K562 (cell line): ENCODE measurements at regions of chr17 and their contacts with region 1.

Region 1: DNA sequence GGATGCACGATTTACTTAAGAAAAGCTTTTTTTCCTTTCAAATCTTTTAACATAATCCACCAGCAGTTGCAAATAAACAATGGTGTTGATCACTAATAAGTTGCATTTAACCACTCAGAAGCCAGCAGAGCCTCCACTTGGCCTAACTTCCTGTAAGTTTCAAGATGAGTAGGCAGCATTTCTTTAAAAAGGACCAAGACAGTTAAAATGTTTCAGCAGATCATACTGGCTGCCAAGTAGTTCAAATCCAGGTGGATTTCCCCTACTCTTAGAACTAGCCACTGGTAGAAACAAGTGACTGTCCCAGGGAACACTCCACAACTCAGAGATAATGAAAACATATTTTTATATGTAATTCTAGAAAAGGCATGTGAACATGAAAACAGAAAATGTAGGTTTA is 17.0 kb upstream of the RFFL start:
- DNase-seq: no peak
- ATAC-seq: no peak; the same call in 1 of the 3 replicates
- H3K4me3 ChIP-seq: no peak overlapping the region
- H3K27ac ChIP-seq: peak overlapping the region; percentile 14; the same call in 1 of the 3 replicates
- H3K4me1 ChIP-seq: peaks cover 2 to 24% of the 10 kb centered on the region in 2 experiments; a peak in 3 of 5 replicates
- H3K27me3 ChIP-seq: no peaks in the 10 kb centered on the region
- CTCF ChIP-seq: no peak
- EP300 ChIP-seq: no peak
- POLR2A ChIP-seq: no peak
- RAD21 ChIP-seq: no peak

Region 2: DNA sequence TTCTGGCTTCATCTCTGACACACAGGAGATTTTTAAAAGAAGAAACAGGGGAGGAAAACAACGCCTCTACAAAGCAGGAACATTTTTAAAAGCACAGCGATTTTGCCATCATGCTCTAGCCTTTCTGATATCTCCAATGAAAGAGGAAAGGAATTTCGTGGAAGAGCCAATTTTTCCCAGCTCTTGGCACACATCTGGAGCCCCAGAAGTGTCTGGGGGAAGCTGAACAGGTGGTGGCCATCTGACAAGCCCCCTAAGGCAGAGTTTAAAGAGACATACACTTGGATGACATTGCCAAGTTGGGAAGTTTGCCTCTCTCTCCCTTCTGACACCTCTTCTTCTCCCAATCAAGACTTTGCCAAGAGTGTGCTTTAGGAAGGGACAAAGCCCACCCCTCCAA is 201.4 kb before region 1 on chr17:
- CTCF ChIA-PET with region 1: no interaction called
- POLR2A ChIA-PET with region 1: no interaction called
- in situ Hi-C with region 1: no loop called
- intact Hi-C with region 1: no loop called
- DNase-seq: no peak
- ATAC-seq: no peak
- H3K4me3 ChIP-seq: no peak overlapping the region
- H3K27ac ChIP-seq: no peak overlapping the region
- H3K4me1 ChIP-seq: peaks cover 2 to 3% of the 10 kb centered on the region in 2 experiments; a peak in 2 of 5 replicates
- H3K27me3 ChIP-seq: peaks cover 0 to 18% of the 10 kb centered on the region in 2 experiments; a peak in 2 of 5 replicates
- CTCF ChIP-seq: no peak
- EP300 ChIP-seq: no peak
- POLR2A ChIP-seq: no peak
- RAD21 ChIP-seq: no peak

Region 3: GRCh38 chr17:35063514-35064223 is 16.9 kb before region 1 on chr17 and contains the start of gene RFFL:
- CTCF ChIA-PET with region 1: no interaction called
- POLR2A ChIA-PET with region 1: interaction called, 16 read pairs
- in situ Hi-C with region 1: no loop called
- intact Hi-C with region 1: no loop called
- DNase-seq: peak; percentile 82 to 90 (median 83)
- ATAC-seq: peak; percentile 92
- H3K4me3 ChIP-seq: no peak within 1 kb of the TSS; the same call in 1 of the 2 replicates
- H3K27ac ChIP-seq: peak within 1 kb of the TSS; percentile 82
- H3K4me1 ChIP-seq: peaks cover 31 to 41% of the 10 kb centered on the region in 2 experiments
- H3K27me3 ChIP-seq: no peaks in the 10 kb centered on the region
- CTCF ChIP-seq: peak; percentile 13 to 66 (median 51); a peak in 3 of 6 replicates
- EP300 ChIP-seq: peak; percentile 47; the same call in 1 of the 2 replicates
- POLR2A ChIP-seq: peak; percentile 44; the same call in 1 of the 2 replicates
- RAD21 ChIP-seq: peak; percentile 53 to 68
- polyA plus RNA-seq, gene RFFL: 3.4 to 3.7 TPM

Region 4: GRCh38 chr17:35175638-35176415 is 95.3 kb after region 1 on chr17:
- CTCF ChIA-PET with region 1: no interaction called
- POLR2A ChIA-PET with region 1: no interaction called
- in situ Hi-C with region 1: no loop called
- intact Hi-C with region 1: no loop called
- DNase-seq: no peak
- ATAC-seq: no peak
- H3K4me3 ChIP-seq: no peak overlapping the region
- H3K27ac ChIP-seq: no peak overlapping the region
- H3K4me1 ChIP-seq: no peaks in the 10 kb centered on the region
- H3K27me3 ChIP-seq: peaks cover 3 to 34% of the 10 kb centered on the region in 2 experiments; a peak in 4 of 5 replicates
- CTCF ChIP-seq: no peak
- EP300 ChIP-seq: no peak
- POLR2A ChIP-seq: no peak
- RAD21 ChIP-seq: no peak

Region 5: DNA sequence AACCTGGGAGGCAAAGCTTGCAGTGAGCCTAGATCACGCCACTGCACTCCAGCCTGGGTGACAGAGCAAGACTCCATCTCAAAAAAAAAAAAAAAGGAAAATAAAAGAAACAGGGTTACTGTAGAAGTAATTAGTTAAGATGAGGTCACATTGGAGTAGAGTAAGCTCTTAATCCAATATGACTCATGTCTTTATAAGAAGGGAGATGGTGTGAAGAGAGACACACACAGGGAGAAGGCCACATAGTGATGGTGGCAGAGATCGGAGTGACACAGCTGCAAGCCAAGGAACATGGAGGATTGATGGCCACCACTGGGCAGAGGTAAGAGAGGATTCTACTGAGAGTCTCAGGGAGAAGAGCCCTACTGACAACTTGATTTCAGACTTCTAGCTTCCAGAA is 147.0 kb after region 1 on chr17:
- CTCF ChIA-PET with region 1: no interaction called
- POLR2A ChIA-PET with region 1: no interaction called
- in situ Hi-C with region 1: no loop called
- intact Hi-C with region 1: no loop called
- DNase-seq: no peak
- ATAC-seq: no peak
- H3K4me3 ChIP-seq: no peak overlapping the region
- H3K27ac ChIP-seq: no peak overlapping the region
- H3K4me1 ChIP-seq: no peaks in the 10 kb centered on the region
- H3K27me3 ChIP-seq: peaks cover 5 to 11% of the 10 kb centered on the region in 2 experiments; a peak in 3 of 5 replicates
- CTCF ChIP-seq: no peak
- EP300 ChIP-seq: no peak
- POLR2A ChIP-seq: no peak
- RAD21 ChIP-seq: no peak